Transverse colon (tissue), 4 donors: ENCODE measurements at regions of chr4 and their contacts with region 1.

Region 1: DNA sequence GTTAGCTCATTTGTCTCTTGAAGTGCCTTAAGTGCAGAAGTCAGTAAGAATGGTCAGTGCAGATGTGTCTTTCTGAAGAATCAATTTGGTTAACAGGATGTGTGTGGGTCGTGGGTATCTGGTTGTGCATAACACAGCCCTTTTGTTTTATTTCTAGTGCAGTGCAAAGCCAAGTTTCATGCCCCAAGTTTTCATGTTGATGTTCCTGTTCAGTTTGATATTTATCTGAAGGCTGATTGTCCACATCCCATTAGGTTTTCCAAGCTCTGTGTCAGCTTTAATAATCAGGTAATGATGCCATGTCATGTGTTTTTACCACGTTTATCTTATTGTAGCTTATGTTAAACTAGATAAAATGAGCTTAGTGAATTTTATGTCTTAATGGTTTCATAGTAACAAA is 27.4 kb downstream of the TRAPPC11 start:
- DNase-seq: no peak
- H3K4me3 ChIP-seq: no peak overlapping the region
- H3K27ac ChIP-seq: no peak overlapping the region
- H3K4me1 ChIP-seq: no peaks in the 10 kb centered on the region
- H3K27me3 ChIP-seq: no peaks in the 10 kb centered on the region
- CTCF ChIP-seq: no peak
- EP300 ChIP-seq: no peak
- POLR2A ChIP-seq: no peak

Region 2: GRCh38 chr4:183666088-183666487 is 20.4 kb before region 1 on chr4:
- in situ Hi-C with region 1: no loop called
- intact Hi-C with region 1: loop called (anchors 2 kb)
- DNase-seq: no peak
- H3K4me3 ChIP-seq: no peak overlapping the region
- H3K27ac ChIP-seq: no peak overlapping the region
- H3K4me1 ChIP-seq: peaks cover 0 to 5% (median 0%) of the 10 kb centered on the region in 4 donors
- H3K27me3 ChIP-seq: no peaks in the 10 kb centered on the region
- CTCF ChIP-seq: no peak
- EP300 ChIP-seq: no peak
- POLR2A ChIP-seq: no peak

Region 3: GRCh38 chr4:183887351-183887750 is 200.9 kb after region 1 on chr4:
- in situ Hi-C with region 1: no loop called
- intact Hi-C with region 1: no loop called
- DNase-seq: no peak
- H3K4me3 ChIP-seq: no peak overlapping the region
- H3K27ac ChIP-seq: no peak overlapping the region
- H3K4me1 ChIP-seq: no peaks in the 10 kb centered on the region
- H3K27me3 ChIP-seq: no peaks in the 10 kb centered on the region
- CTCF ChIP-seq: no peak
- EP300 ChIP-seq: no peak
- POLR2A ChIP-seq: no peak